Activated CD8-positive, alpha-beta T cell treated with anti-CD3 and anti-CD28 coated beads for 36 hours (primary cell): ENCODE measurements at regions of chr6 and their contacts with region 1.

Region 1: DNA sequence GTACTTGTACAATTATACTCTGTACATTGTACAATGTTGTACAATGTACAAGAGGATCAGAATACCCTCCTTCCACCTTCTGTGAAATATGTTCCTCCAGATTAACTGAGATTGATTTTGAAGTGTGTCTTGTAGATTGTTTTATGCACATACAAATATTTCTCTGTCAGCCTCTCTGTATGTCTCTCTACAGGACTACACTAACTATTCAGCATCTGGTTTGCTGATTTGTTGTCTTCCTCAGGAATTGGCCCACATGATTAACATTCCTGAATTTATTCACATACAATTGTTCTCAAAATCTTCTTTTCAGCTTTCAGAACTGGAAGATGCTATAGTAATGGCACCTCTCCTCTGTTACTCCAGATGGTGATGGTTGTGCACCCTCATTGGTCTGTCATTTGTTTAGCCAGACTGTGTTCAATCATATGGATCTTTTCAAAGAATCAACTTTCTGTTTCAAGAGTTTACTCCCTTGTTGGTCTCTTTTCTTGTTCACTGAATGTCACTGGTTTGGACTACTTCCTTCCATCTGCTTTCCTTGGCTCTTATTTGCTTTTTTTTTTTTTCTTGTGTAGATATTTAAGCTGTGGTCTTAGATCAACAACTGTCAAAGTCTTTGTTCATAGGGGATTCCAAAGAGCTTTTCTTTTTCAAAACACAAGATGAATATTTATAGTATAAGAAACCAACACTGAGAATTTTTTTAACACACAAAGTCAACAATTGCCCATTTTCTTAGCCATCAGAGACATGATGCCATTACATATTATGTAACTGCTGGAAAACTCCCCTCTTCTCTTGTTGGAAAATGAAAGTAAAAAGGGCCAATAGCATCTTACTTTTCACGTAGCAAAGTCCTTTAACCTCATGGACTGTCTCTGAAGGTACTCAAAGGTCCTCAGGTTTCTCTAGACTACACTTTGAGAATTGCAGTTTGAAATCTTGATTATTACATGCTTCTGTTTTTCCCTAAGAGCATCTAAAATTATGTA is 67.9 kb downstream of the LPA start:
- DNase-seq: no peak
- ATAC-seq: no peak
- H3K4me3 Mint-ChIP-seq: no peak overlapping the region
- H3K27ac Mint-ChIP-seq: no peak overlapping the region
- H3K4me1 Mint-ChIP-seq: no peaks in the 10 kb centered on the region
- H3K27me3 Mint-ChIP-seq: peaks cover 14% of the 10 kb centered on the region
- CTCF ChIP-seq: no peak

Region 2: GRCh38 chr6:160337301-160337700 is 258.8 kb before region 1 on chr6:
- CTCF ChIA-PET with region 1: no interaction called
- POLR2A ChIA-PET with region 1: no interaction called
- intact Hi-C with region 1: no loop called
- DNase-seq: no peak
- ATAC-seq: no peak
- H3K4me3 Mint-ChIP-seq: no peak overlapping the region
- H3K27ac Mint-ChIP-seq: no peak overlapping the region
- H3K4me1 Mint-ChIP-seq: no peaks in the 10 kb centered on the region
- H3K27me3 Mint-ChIP-seq: peaks cover 29% of the 10 kb centered on the region
- CTCF ChIP-seq: no peak

Region 3: DNA sequence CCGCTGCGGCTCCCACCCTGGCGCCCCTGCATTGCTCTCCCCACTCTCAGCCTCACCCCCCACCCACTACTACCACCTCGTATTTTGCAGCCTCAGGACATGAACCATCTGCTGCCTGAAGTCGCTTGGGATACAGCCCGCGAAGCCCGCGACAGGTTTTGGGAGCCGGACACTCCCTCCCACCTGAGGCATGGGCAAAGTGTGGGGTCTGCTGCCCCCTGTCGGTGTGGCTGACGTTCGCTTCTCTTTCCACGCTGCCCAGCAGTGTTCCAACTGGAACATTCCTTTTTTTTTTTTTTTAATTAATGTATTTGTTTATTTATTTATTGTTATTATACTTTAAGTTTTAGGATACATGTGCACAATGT is 83.3 kb after region 1 on chr6:
- CTCF ChIA-PET with region 1: no interaction called
- POLR2A ChIA-PET with region 1: no interaction called
- intact Hi-C with region 1: loop called (anchors 10 kb)
- DNase-seq: no peak
- ATAC-seq: no peak
- H3K4me3 Mint-ChIP-seq: no peak overlapping the region
- H3K27ac Mint-ChIP-seq: no peak overlapping the region
- H3K4me1 Mint-ChIP-seq: no peaks in the 10 kb centered on the region
- H3K27me3 Mint-ChIP-seq: no peaks in the 10 kb centered on the region
- CTCF ChIP-seq: no peak